ENCODE measurements at regions of chr3 and their contacts with region 1.

Region 1: GRCh38 chr3:194134757-194135528 is 1.0 kb upstream of the HES1 start:
- DNase-seq: peak; percentile 93
- H3K4me3 ChIP-seq: peak overlapping the region; percentile 68 to 71
- H3K27ac ChIP-seq: peak overlapping the region; percentile 94 to 96
- H3K4me1 ChIP-seq: peaks cover 23 to 63% of the 10 kb centered on the region in 2 experiments; a peak in 3 of 4 replicates
- H3K27me3 ChIP-seq: no peaks in the 10 kb centered on the region
- CTCF ChIP-seq: no peak
- EP300 ChIP-seq: peak; percentile 53 to 55; a peak in 2 of 4 replicates
- RAD21 ChIP-seq: peak; percentile 11; the same call in 1 of the 2 replicates

Region 2: GRCh38 chr3:193665370-193665989 is 469.5 kb before region 1 on chr3:
- CTCF ChIA-PET with region 1: interaction called, 28 read pairs
- POLR2A ChIA-PET with region 1: no interaction called
- DNase-seq: peak; percentile 24
- H3K4me3 ChIP-seq: no peak overlapping the region
- H3K27ac ChIP-seq: no peak overlapping the region
- H3K4me1 ChIP-seq: no peaks in the 10 kb centered on the region; a peak in 1 of 4 replicates
- H3K27me3 ChIP-seq: no peaks in the 10 kb centered on the region
- CTCF ChIP-seq: peak; percentile 75
- EP300 ChIP-seq: no peak
- RAD21 ChIP-seq: peak; percentile 64

Region 3: GRCh38 chr3:193780810-193781472 is 354.0 kb before region 1 on chr3:
- CTCF ChIA-PET with region 1: interaction called, 72 read pairs
- POLR2A ChIA-PET with region 1: interaction called, 5 read pairs
- DNase-seq: peak; percentile 84
- H3K4me3 ChIP-seq: peak overlapping the region in 1 of 2 experiments; percentile 3; a peak in 1 of 4 replicates
- H3K27ac ChIP-seq: peak overlapping the region in 1 of 2 experiments; percentile 38; a peak in 1 of 4 replicates
- H3K4me1 ChIP-seq: peaks cover 13 to 34% of the 10 kb centered on the region in 2 experiments; a peak in 3 of 4 replicates
- H3K27me3 ChIP-seq: peaks cover 15% of the 10 kb centered on the region; the same call in 1 of the 2 replicates
- CTCF ChIP-seq: peak; percentile 83
- EP300 ChIP-seq: 0 out of 4 replicates have a peak, but pooled peaks of 1 of the 2 experiments have one; percentile 48
- RAD21 ChIP-seq: peak; percentile 89

Region 4: DNA sequence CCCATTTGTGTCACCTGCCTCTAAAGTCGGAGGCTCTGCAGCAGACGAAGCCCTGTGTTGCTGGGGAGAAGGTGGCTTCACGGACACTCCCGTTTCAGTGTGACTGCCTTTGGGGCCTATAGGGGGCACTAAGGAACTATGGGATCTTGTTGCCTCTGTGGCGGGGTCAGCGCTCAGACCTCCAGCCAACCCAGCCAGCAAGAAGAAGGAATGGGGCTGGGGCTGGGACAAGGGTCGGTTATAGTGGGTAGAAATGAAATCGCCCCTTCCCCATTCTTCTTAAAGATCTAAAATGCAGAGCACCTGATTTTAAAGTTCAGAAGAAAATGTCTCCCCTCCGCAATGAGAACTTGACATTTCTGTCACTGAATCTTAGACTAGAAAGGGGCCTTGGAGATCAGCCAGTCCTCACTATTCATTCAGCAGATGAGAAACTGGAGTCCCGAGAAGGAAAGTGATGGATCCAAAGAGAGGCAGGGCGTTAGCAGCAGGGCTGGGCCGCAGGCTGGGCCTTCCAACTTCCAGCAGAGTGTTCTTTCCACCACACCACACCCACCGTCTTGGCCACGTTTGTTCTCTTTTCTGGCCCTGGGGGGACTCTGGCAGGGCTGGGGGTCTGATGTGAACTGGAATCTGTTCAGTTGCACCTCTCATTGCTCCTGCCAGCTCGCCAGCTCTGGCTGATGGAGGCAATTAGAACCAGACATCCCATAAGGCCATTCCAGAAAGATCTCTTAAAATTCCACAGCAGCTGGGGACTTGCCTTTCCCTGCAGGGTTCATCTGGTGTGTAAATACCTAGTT is 346.6 kb before region 1 on chr3:
- CTCF ChIA-PET with region 1: interaction called, 49 read pairs
- POLR2A ChIA-PET with region 1: no interaction called
- DNase-seq: peak; percentile 75
- H3K4me3 ChIP-seq: peak overlapping the region in 1 of 2 experiments; percentile 27; a peak in 1 of 4 replicates
- H3K27ac ChIP-seq: peak overlapping the region in 1 of 2 experiments; percentile 55; a peak in 2 of 4 replicates
- H3K4me1 ChIP-seq: peaks cover 2 to 27% of the 10 kb centered on the region in 2 experiments; a peak in 3 of 4 replicates
- H3K27me3 ChIP-seq: no peaks in the 10 kb centered on the region
- CTCF ChIP-seq: peak; percentile 51
- EP300 ChIP-seq: peak in 1 of 2 experiments; percentile 85; a peak in 2 of 4 replicates
- RAD21 ChIP-seq: peak; percentile 74

Region 5: GRCh38 chr3:194250098-194251002 is 115.4 kb after region 1 on chr3:
- CTCF ChIA-PET with region 1: interaction called, 10 read pairs
- POLR2A ChIA-PET with region 1: interaction called, 6 read pairs
- DNase-seq: peak; percentile 84
- H3K4me3 ChIP-seq: no peak overlapping the region
- H3K27ac ChIP-seq: peak overlapping the region in 1 of 2 experiments; percentile 95; a peak in 3 of 4 replicates
- H3K4me1 ChIP-seq: peaks cover 0 to 59% of the 10 kb centered on the region in 2 experiments; a peak in 3 of 4 replicates
- H3K27me3 ChIP-seq: peaks cover 20% of the 10 kb centered on the region
- CTCF ChIP-seq: no peak
- EP300 ChIP-seq: no peak; a peak in 1 of 4 replicates
- RAD21 ChIP-seq: no peak

Region 6: GRCh38 chr3:194265483-194265892 is 130.5 kb after region 1 on chr3:
- CTCF ChIA-PET with region 1: interaction called, 24 read pairs
- POLR2A ChIA-PET with region 1: interaction called, 49 read pairs
- DNase-seq: peak; percentile 83
- H3K4me3 ChIP-seq: no peak overlapping the region
- H3K27ac ChIP-seq: peak overlapping the region in 1 of 2 experiments; percentile 64; a peak in 2 of 4 replicates
- H3K4me1 ChIP-seq: peaks cover 0 to 33% of the 10 kb centered on the region in 2 experiments; a peak in 2 of 4 replicates
- H3K27me3 ChIP-seq: no peaks in the 10 kb centered on the region
- CTCF ChIP-seq: no peak
- EP300 ChIP-seq: no peak
- RAD21 ChIP-seq: no peak; the same call in 1 of the 2 replicates